Activated CD4-positive, alpha-beta T cell treated with anti-CD3 and anti-CD28 coated beads for 36 hours (primary cell): ENCODE measurements at regions of chr20 and their contacts with region 1.

Region 1: DNA sequence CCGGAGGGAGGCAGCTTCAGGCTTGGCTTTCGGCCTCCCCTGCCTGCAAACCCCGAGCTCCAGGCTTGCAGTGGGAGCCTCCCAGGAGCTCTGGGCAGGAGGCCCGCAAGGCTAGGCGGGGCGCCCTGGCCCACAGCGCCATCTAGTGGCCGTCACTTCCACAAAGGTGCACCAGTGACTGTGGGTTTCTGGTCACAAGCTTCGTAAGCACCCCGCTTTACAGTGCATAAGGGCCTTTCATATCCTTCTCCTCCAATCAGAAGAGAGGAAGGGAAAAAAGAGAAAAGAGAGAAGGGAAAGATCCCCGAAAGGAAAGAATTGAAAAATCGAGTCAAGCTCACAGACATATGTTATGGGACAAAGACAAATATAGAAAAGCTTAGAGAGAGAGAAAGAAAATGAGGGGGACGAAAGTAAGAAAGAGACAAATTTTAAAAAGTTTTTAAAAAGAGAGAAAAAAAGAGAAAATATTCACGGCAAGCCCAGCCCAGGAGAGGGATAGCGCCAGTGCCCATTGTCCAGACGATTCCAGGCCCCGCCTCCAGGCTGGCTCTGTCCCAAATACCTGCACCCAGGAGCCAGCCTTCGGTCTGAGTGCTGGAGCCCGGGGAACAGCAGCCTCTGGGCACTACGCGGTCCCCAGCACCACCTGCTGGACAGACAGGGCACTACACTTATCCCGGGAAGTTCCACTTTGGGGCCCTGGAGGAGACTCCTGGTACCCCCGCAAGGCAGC is 207.1 kb downstream of the PREX1 start:
- DNase-seq: peak; percentile 90
- ATAC-seq: peak; percentile 94
- H3K4me3 Mint-ChIP-seq: peak overlapping the region; percentile 32
- H3K27ac Mint-ChIP-seq: peak overlapping the region; percentile 10
- H3K4me1 Mint-ChIP-seq: peaks cover 7% of the 10 kb centered on the region
- H3K27me3 Mint-ChIP-seq: no peaks in the 10 kb centered on the region

Region 2: GRCh38 chr20:47663333-47664067 is 957.2 kb before region 1 on chr20:
- CTCF ChIA-PET with region 1: interaction called, 8 read pairs
- POLR2A ChIA-PET with region 1: no interaction called
- intact Hi-C with region 1: loop called (anchors 1 to 5 kb)
- DNase-seq: peak; percentile 84
- ATAC-seq: peak; percentile 85
- H3K4me3 Mint-ChIP-seq: no peak overlapping the region
- H3K27ac Mint-ChIP-seq: no peak overlapping the region
- H3K4me1 Mint-ChIP-seq: peaks cover 6% of the 10 kb centered on the region
- H3K27me3 Mint-ChIP-seq: no peaks in the 10 kb centered on the region

Region 3: DNA sequence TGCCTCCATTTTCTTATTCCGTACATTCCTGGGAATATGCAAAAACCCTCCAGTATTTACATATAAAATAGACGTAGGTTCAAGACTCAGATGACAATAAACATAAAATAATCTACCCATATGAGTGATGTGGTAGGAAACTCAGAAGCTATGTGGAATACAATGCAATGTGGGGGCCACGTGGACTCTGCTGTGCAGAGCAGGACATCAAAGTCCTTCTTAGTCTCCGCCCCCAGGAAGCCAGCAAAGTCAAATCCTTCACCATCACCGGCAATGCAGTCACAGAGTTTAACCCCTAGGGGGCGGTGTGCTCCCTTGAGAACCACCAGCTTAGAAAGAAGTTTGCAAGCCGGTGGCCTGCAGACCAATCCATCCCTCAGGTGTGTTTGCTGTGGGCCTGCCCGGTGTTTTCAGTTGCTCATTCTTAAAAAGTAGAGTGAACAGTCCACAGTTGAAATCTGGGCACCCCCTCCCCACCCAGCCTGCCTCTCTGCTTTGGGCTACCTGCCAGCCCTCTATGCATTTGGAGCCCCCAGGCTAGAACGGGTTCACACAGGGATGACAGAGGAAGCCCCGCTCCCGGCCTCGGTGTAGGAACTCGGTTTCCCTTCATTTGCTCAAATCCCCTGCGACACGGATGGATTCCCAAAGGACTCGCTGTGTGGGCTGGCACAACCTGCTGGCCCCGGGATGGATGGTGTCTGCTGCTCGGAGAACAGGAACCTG is 895.3 kb before region 1 on chr20:
- CTCF ChIA-PET with region 1: interaction called, 15 read pairs
- POLR2A ChIA-PET with region 1: no interaction called
- intact Hi-C with region 1: loop called (anchors 1 to 2 kb)
- DNase-seq: peak; percentile 90
- ATAC-seq: peak; percentile 72
- H3K4me3 Mint-ChIP-seq: no peak overlapping the region
- H3K27ac Mint-ChIP-seq: peak overlapping the region; percentile 63
- H3K4me1 Mint-ChIP-seq: peaks cover 29% of the 10 kb centered on the region
- H3K27me3 Mint-ChIP-seq: no peaks in the 10 kb centered on the region

Region 4: GRCh38 chr20:48350313-48351008 is 270.2 kb before region 1 on chr20:
- CTCF ChIA-PET with region 1: interaction called, 5 read pairs
- POLR2A ChIA-PET with region 1: no interaction called
- intact Hi-C with region 1: loop called in 1 of 2 experiments (anchors 2 kb)
- DNase-seq: peak; percentile 30
- ATAC-seq: peak; percentile 30
- H3K4me3 Mint-ChIP-seq: no peak overlapping the region
- H3K27ac Mint-ChIP-seq: no peak overlapping the region
- H3K4me1 Mint-ChIP-seq: no peaks in the 10 kb centered on the region
- H3K27me3 Mint-ChIP-seq: peaks cover 7% of the 10 kb centered on the region

Region 5: GRCh38 chr20:48750947-48751635 is 130.4 kb after region 1 on chr20:
- CTCF ChIA-PET with region 1: no interaction called
- POLR2A ChIA-PET with region 1: no interaction called
- intact Hi-C with region 1: no loop called
- DNase-seq: peak; percentile 41
- ATAC-seq: peak; percentile 63
- H3K4me3 Mint-ChIP-seq: no peak overlapping the region
- H3K27ac Mint-ChIP-seq: peak overlapping the region; percentile 84
- H3K4me1 Mint-ChIP-seq: peaks cover 54% of the 10 kb centered on the region
- H3K27me3 Mint-ChIP-seq: no peaks in the 10 kb centered on the region